Testis (tissue), 5 donors: ENCODE measurements at regions of chr16 and their contacts with region 1.

Region 1: DNA sequence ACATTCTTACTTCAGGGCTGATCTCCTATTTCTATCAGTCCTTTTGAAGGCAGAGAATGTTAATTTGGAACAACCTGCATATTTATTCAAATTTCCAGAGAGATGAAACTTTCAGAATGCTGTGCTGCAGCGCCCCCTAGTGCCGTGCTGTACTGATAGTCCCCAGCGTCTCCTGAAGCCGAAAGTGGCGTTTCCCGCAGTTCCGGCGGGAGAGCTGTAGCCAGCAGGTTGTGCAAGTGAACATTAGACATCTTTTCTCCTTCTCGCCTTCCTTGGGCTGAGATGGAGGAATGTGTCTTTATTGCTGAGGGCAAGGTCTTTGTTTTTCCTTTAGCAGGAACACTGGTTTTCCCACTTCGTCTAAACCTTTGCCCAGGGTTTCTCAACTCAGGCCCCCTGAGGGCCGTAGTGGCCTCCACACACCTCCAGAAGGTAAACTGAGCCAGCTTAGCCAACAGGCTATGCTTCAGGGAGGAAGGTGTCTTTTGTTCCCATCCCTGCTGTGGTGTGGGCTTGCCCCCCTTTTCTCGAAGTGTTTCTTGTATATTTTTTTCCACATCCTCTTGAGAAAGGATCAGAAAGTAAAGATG is 26.4 kb downstream of the USP10 start:
- DNase-seq: peak; percentile 95
- H3K4me3 ChIP-seq: no peak overlapping the region
- H3K27ac ChIP-seq: no peak overlapping the region
- H3K4me1 ChIP-seq: peaks cover 37% of the 10 kb centered on the region
- H3K27me3 ChIP-seq: no peaks in the 10 kb centered on the region
- CTCF ChIP-seq: peak; percentile 89 to 91 (median 91)
- POLR2A ChIP-seq: no peak

Region 2: DNA sequence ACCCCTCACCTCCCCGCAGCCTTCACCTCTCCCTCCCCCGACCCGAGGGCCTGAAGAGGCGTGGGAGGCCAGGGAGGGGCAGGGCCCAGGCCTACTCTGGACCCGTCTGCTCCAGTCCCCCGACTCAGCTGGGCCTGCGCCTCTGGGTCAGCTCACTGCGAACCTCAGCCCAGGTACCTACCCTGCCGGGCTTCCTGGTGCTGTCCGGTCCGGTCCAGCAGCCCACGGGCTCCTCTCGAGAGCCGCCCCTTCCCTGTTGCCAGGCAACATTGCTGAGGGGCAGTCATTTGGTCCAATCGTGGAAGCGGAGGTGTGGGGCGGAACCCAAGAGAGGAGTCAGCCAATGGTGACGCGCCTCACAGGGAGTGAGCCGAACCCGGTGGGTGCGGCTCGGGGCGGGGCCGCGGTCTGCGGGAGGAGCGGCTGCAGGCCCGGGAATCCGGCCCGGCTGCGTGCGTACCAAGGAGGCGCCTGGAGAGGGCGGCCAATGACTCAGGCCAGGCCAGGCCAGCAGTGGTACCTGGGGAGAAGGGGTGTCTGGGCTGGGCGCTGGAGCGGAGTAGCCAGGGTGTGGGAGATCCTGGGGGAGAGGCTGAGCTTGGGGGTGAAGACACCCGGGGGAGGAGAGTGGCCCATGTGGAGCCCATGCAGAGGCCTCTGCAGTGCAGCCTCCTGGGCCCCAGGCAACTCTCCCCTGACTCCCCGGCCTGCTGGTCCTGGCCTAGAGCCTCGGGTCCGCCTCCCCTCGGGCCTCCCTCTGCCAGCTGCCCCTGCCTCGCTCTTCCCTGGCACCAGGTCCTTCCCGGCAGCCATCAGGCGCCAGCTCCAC is 221.5 kb before region 1 on chr16 and contains the start of gene MEAK7:
- intact Hi-C with region 1: loop called (anchors 5 kb)
- DNase-seq: peak; percentile 100
- H3K4me3 ChIP-seq: peak within 1 kb of the TSS; percentile 82 to 83
- H3K27ac ChIP-seq: peak within 1 kb of the TSS; percentile 80 to 83
- H3K4me1 ChIP-seq: peaks cover 14% of the 10 kb centered on the region
- H3K27me3 ChIP-seq: no peaks in the 10 kb centered on the region
- CTCF ChIP-seq: peak in 1 of 3 experiments; percentile 6
- POLR2A ChIP-seq: peak; percentile 4
- total RNA-seq, gene MEAK7: 11.2 to 20.0 TPM

Region 3: DNA sequence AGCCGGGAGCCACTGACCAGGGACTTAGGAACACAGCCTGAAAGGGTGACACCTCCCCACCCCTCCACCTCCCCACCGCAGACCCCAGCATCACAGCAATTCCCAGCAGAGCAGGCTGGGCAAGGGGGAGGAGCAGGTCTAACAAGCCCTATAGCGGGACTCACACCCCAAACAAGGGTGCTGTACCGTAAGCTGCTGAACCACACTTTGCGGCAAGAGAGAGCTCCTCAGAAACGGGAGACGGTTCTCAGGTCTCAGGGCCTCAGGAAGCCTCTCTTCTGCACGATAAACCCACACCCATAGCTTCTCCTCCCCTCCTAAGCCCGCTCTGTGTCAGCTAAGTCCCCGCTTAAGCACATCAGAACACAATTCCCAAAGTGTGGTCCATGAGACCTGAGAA is 96.6 kb before region 1 on chr16:
- intact Hi-C with region 1: loop called (anchors 10 kb)
- DNase-seq: no peak
- H3K4me3 ChIP-seq: no peak overlapping the region
- H3K27ac ChIP-seq: no peak overlapping the region
- H3K4me1 ChIP-seq: peaks cover 18% of the 10 kb centered on the region
- H3K27me3 ChIP-seq: no peaks in the 10 kb centered on the region
- CTCF ChIP-seq: no peak
- POLR2A ChIP-seq: no peak

Region 4: DNA sequence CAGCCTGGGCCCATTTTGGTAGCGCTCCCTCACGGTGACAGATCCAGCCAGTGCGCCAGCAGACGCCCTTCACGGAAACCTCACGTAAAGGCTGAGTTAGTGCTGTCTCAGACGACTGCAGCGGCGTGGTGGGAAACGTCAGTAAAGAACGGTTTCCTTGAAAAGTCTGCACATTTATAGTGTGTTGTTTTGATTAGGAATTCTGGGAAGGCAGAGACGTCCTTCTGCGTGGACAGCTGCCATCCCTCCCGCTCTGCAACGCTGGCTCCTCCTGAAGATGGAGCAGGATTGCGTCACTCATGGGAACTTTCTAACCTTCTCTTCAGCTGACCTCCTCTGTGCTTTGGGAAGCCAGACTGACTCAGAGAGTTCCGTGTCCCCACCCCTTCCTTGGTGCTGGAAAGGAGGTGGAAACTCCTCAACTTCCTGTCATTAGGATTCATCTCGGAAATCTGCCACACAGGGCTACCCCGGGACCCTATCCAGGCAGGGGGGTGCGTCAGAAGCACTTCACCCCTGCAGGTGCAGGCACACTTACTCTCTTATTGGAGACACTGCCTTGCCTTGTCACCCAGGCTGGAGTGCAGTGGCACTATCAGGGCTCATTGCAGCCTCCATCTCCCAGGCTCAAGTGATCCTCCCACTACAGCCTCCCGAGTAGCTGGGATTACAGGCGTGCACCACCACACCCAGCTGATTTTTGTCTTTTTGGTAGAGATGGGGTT is 69.3 kb after region 1 on chr16:
- intact Hi-C with region 1: no loop called
- DNase-seq: peak; percentile 79
- H3K4me3 ChIP-seq: no peak overlapping the region
- H3K27ac ChIP-seq: peak overlapping the region; percentile 52 to 71
- H3K4me1 ChIP-seq: peaks cover 12% of the 10 kb centered on the region
- H3K27me3 ChIP-seq: no peaks in the 10 kb centered on the region
- CTCF ChIP-seq: no peak
- POLR2A ChIP-seq: no peak